Naive thymus-derived CD4-positive, alpha-beta T cell (primary cell): ENCODE measurements at regions of chr12 and their contacts with region 1.

Region 1: DNA sequence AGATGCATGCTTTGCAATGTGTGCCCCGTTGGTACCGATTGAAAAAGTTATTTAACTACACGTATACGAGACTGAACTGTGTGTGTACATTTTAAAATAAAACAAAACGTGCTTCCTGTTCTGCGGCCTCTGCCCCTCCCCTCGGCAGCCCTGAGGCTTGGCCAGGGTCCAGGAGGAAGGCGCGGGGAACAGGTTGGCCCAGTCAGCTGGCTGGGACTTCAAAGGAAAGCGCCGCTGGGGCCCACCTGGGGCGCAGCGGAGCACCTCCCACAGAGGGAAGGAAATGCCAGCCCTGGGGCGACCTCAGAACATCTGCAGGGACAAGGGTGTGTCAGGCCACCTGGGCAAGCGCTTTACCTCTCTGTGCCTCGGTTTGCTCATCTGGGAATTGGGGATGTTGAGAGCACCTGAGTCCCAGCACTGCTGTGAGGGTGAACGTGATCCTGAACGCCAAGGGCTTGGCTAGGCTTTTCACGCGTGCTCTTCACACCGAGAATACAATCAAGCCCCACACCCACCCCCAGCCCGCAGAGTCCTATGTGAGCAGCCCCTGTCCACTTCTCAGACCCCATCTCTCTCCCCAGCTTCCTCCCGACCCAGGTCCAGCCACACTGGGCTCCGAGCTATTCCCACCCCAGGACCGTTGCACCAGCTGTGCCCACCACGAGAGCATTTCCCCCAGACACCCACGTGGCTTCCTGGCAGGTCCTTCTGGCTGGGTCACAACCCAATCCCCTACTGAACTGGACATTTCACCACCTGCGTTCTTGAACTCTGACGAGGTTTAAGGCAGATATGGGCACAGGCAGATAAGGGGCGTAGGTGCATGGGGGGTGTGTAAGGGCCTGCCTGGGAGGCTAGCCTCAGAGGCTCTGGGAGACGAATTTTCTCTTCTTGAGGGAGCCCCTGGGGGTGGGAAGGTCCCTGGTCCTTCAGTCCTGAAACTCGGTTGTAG is 41.9 kb upstream of the NCOR2 start:
- DNase-seq: peak; percentile 38 to 94 (median 92)
- ATAC-seq: peak; percentile 95
- H3K4me3 ChIP-seq: peak overlapping the region; percentile 29
- H3K4me3 Mint-ChIP-seq: peak overlapping the region; percentile 50 to 90 (median 83)
- H3K27ac ChIP-seq: no peak overlapping the region
- H3K27ac Mint-ChIP-seq: peak overlapping the region in 8 of 9 donors; percentile 57 to 85 (median 70)
- H3K4me1 ChIP-seq: peaks cover 23 to 31% of the 10 kb centered on the region in 2 donors
- H3K4me1 Mint-ChIP-seq: peaks cover 18 to 59% (median 52%) of the 10 kb centered on the region in 7 donors
- H3K27me3 ChIP-seq: no peaks in the 10 kb centered on the region
- H3K27me3 Mint-ChIP-seq: peaks cover 0 to 20% (median 0%) of the 10 kb centered on the region in 5 donors

Region 2: GRCh38 chr12:124713436-124714082 is 104.2 kb after region 1 on chr12:
- CTCF ChIA-PET with region 1: no interaction called
- POLR2A ChIA-PET with region 1: no interaction called
- intact Hi-C with region 1: loop called in 1 of 2 experiments (anchors 1 kb)
- DNase-seq: peak in 8 of 9 donors; percentile 46 to 74 (median 63)
- ATAC-seq: peak; percentile 77
- H3K4me3 ChIP-seq: peak overlapping the region; percentile 56
- H3K4me3 Mint-ChIP-seq: peak overlapping the region; percentile 72 to 87 (median 82)
- H3K27ac ChIP-seq: no peak overlapping the region
- H3K27ac Mint-ChIP-seq: peak overlapping the region; percentile 72 to 93 (median 88)
- H3K4me1 ChIP-seq: peaks cover 12 to 14% of the 10 kb centered on the region in 2 donors
- H3K4me1 Mint-ChIP-seq: peaks cover 16 to 26% (median 19%) of the 10 kb centered on the region in 7 donors
- H3K27me3 ChIP-seq: no peaks in the 10 kb centered on the region
- H3K27me3 Mint-ChIP-seq: peaks cover 0 to 15% (median 0%) of the 10 kb centered on the region in 5 donors